Activated CD8-positive, alpha-beta memory T cell treated with anti-CD3 and anti-CD28 coated beads, Interleukin-2, amount 10 ng/mL, durations not matched to agents 7 days and 5 days (primary cell): ENCODE measurements at regions of chr10 and their contacts with region 1.

Region 1: GRCh38 chr10:102225646-102226541 is at the start of gene ELOVL3:
- DNase-seq: peak; percentile 94
- ATAC-seq: peak; percentile 96
- H3K4me3 Mint-ChIP-seq: peak within 1 kb of the TSS; percentile 59
- H3K27ac Mint-ChIP-seq: no peak within 1 kb of the TSS
- H3K4me1 Mint-ChIP-seq: peaks cover 19% of the 10 kb centered on the region
- H3K27me3 Mint-ChIP-seq: peaks cover 73% of the 10 kb centered on the region
- total RNA-seq, gene ELOVL3: not detected

Region 2: DNA sequence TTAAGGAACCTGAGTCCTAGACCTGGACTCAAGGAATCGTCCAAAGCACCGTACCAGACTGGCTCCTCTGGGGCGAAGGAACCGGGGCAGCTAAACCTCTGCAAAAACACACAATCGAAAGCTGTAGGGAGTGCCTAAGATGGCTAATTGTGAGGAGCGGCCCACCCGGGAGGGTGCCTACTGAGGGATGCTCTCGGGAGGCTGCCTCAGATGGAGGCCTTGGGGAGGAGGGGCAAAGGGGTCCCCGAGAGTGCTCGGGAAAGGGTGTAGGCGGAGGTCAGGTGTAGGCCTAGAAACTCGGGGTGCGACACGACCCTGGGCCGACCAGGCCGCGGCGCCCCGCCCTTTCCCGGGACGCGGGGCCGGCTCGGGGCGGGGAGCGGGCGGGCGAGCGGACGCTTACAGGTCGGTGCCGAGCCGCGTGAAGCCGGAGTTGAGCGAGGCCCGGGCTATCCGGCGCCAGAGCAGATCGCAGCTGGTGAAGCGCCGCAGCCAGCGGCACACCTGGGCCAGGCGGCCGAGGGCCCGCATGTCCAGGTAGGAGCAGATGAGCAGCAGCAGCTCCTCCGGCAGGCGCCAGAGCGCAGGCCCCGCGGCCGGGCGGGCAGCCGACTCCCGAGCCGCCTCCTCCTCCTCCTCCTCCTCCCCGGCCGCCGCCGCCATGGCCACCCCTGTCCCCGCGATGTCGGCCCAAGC is 531.8 kb before region 1 on chr10:
- CTCF ChIA-PET with region 1: no interaction called
- DNase-seq: peak; percentile 80
- ATAC-seq: peak; percentile 80
- H3K4me3 Mint-ChIP-seq: peak overlapping the region; percentile 96
- H3K27ac Mint-ChIP-seq: peak overlapping the region; percentile 97
- H3K4me1 Mint-ChIP-seq: peaks cover 35% of the 10 kb centered on the region
- H3K27me3 Mint-ChIP-seq: no peaks in the 10 kb centered on the region

Region 3: GRCh38 chr10:101920546-101920945 is 305.3 kb before region 1 on chr10:
- CTCF ChIA-PET with region 1: no interaction called
- DNase-seq: no peak
- ATAC-seq: no peak
- H3K4me3 Mint-ChIP-seq: no peak overlapping the region
- H3K27ac Mint-ChIP-seq: no peak overlapping the region
- H3K4me1 Mint-ChIP-seq: peaks cover 14% of the 10 kb centered on the region
- H3K27me3 Mint-ChIP-seq: no peaks in the 10 kb centered on the region

Region 4: GRCh38 chr10:102151774-102152544 is 73.9 kb before region 1 on chr10 and contains the start of gene NOLC1:
- CTCF ChIA-PET with region 1: interaction called, 17 read pairs
- DNase-seq: peak; percentile 100
- ATAC-seq: peak; percentile 96
- H3K4me3 Mint-ChIP-seq: peak within 1 kb of the TSS; percentile 96
- H3K27ac Mint-ChIP-seq: peak within 1 kb of the TSS; percentile 90
- H3K4me1 Mint-ChIP-seq: peaks cover 45% of the 10 kb centered on the region
- H3K27me3 Mint-ChIP-seq: no peaks in the 10 kb centered on the region
- total RNA-seq, gene NOLC1: 107 to 149 TPM

Region 5: GRCh38 chr10:102185811-102186527 is 39.9 kb before region 1 on chr10:
- CTCF ChIA-PET with region 1: interaction called, 31 read pairs
- DNase-seq: no peak
- ATAC-seq: no peak
- H3K4me3 Mint-ChIP-seq: no peak overlapping the region
- H3K27ac Mint-ChIP-seq: no peak overlapping the region
- H3K4me1 Mint-ChIP-seq: peaks cover 14% of the 10 kb centered on the region
- H3K27me3 Mint-ChIP-seq: peaks cover 1% of the 10 kb centered on the region

Region 6: DNA sequence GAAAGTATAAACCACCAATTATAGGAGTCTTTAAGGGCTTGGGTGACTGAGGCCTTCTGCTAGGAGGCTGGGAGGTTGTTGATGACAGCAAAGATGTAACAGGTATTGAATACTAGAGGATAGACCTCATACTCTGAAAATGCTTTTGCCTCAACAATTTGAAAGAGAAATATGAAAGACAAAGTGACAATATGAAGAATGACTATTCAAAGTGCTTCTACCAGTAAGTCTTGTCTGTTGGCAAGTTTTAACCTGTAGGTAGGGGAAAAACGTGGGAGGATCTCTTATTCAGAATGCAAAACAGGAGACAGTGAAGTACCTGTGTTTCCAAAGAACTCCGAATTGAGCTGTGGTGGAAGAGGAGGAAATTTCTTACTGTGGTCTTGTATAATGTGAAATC is 57.6 kb after region 1 on chr10:
- CTCF ChIA-PET with region 1: interaction called, 30 read pairs
- DNase-seq: no peak
- ATAC-seq: peak; percentile 22
- H3K4me3 Mint-ChIP-seq: peak overlapping the region; percentile 3
- H3K27ac Mint-ChIP-seq: peak overlapping the region; percentile 75
- H3K4me1 Mint-ChIP-seq: peaks cover 68% of the 10 kb centered on the region
- H3K27me3 Mint-ChIP-seq: no peaks in the 10 kb centered on the region

Region 7: GRCh38 chr10:102352066-102352715 is 126.3 kb after region 1 on chr10:
- CTCF ChIA-PET with region 1: interaction called, 824 read pairs
- DNase-seq: peak; percentile 80
- ATAC-seq: peak; percentile 74
- H3K4me3 Mint-ChIP-seq: no peak overlapping the region
- H3K27ac Mint-ChIP-seq: no peak overlapping the region
- H3K4me1 Mint-ChIP-seq: peaks cover 4% of the 10 kb centered on the region
- H3K27me3 Mint-ChIP-seq: no peaks in the 10 kb centered on the region

Region 8: DNA sequence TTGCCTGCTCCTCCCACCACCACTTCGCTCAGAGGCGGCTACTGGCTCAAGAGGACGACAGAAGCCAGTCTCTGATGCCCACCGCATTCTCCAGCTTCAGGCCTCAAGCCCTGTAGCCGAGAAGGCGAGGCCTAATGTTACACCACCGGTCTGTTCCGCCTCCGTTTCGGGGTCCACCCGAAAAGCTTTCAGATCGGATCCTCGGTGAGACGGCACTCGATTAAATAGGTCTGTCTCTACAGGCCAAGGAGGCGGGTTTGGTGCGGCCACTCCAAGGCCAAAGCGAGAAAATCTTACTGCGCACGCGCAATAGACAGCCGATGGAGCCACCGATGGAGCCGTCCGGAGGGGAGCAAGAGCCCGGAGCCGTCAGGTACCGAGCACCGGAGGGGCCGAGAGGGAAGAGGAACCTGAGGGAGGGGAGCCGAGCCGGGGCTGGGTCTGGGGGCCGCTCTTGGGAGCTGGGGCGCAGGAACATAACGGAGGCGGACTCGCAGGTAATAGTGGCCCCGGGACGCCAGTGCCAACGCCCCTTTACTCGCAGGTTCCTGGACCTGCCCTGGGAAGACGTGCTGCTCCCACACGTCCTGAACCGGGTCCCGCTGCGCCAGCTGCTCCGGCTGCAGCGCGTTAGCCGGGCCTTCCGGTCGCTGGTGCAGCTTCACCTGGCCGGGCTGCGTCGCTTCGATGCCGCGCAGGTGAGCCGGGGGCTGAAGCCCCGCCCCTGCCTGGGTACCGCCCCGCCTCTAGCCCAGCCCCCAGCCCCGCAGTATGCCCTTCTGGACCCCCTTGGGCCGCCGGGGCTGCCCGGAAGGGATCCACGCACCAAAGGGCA is 195.1 kb after region 1 on chr10 and contains the start of gene FBXL15:
- CTCF ChIA-PET with region 1: interaction called, 80 read pairs
- DNase-seq: peak; percentile 98
- ATAC-seq: peak; percentile 87
- H3K4me3 Mint-ChIP-seq: peak within 1 kb of the TSS; percentile 97
- H3K27ac Mint-ChIP-seq: peak within 1 kb of the TSS; percentile 95
- H3K4me1 Mint-ChIP-seq: peaks cover 40% of the 10 kb centered on the region
- H3K27me3 Mint-ChIP-seq: peaks cover 19% of the 10 kb centered on the region
- total RNA-seq, gene FBXL15: 13.5 to 15.2 TPM

Region 9: DNA sequence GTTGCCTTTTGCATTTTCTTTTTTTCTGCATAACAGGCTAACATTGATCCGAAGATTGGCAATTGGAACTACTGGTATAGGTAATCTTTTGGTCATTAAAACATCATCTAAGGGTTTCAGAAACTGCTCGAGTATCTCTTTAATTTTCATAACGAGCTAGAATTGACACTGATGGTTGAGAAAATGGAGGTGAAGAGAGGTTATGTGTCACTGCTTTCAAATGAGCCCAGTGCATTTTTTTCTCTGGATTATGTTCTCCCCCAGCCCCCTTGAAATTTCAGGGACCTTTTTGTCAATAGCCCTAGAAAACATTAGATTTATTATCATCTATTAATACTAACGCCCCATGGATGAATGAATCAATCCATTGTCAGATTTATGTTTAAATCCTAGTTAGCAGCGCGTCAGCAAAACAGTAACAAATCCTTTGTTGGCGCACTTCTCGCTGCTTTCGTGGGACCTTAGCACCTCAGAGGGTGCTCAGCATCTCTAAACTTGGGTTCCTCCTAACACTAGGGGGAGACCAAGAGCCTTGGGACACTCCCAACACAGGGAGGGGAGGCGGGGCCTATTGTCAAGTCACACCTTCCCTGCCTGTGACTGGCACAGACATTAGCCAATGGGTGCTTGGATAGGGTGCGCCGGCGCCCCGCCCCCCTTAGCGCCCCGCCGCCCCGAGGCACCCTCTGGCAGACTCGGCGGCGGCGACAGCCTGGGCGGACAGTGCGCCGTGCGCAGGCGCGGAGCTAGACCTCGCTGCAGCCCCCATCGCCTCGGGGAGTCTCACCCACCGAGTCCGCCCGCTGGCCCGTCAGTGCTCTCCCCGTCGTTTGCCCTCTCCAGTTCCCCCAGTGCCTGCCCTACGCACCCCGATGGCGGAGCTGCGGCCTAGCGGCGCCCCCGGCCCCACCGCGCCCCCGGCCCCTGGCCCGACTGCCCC is 277.7 kb after region 1 on chr10 and contains the start of gene SUFU:
- CTCF ChIA-PET with region 1: interaction called, 20 read pairs
- DNase-seq: peak; percentile 99
- ATAC-seq: peak; percentile 78
- H3K4me3 Mint-ChIP-seq: no peak within 1 kb of the TSS
- H3K27ac Mint-ChIP-seq: peak within 1 kb of the TSS; percentile 78
- H3K4me1 Mint-ChIP-seq: peaks cover 28% of the 10 kb centered on the region
- H3K27me3 Mint-ChIP-seq: no peaks in the 10 kb centered on the region
- total RNA-seq, gene SUFU: 9.8 to 12.9 TPM